Activated CD4-positive, alpha-beta memory T cell treated with anti-CD3 and anti-CD28 coated beads, Interleukin-2, amount 10 ng/mL, durations not matched to agents 7 days and 5 days (primary cell): ENCODE measurements at regions of chr4 and their contacts with region 1.

Region 1: GRCh38 chr4:24537025-24537424 is 47.3 kb downstream of the DHX15 start:
- DNase-seq: no peak
- H3K4me3 Mint-ChIP-seq: no peak overlapping the region
- H3K27ac Mint-ChIP-seq: no peak overlapping the region
- H3K4me1 Mint-ChIP-seq: peaks cover 27% of the 10 kb centered on the region
- H3K27me3 Mint-ChIP-seq: no peaks in the 10 kb centered on the region

Region 2: DNA sequence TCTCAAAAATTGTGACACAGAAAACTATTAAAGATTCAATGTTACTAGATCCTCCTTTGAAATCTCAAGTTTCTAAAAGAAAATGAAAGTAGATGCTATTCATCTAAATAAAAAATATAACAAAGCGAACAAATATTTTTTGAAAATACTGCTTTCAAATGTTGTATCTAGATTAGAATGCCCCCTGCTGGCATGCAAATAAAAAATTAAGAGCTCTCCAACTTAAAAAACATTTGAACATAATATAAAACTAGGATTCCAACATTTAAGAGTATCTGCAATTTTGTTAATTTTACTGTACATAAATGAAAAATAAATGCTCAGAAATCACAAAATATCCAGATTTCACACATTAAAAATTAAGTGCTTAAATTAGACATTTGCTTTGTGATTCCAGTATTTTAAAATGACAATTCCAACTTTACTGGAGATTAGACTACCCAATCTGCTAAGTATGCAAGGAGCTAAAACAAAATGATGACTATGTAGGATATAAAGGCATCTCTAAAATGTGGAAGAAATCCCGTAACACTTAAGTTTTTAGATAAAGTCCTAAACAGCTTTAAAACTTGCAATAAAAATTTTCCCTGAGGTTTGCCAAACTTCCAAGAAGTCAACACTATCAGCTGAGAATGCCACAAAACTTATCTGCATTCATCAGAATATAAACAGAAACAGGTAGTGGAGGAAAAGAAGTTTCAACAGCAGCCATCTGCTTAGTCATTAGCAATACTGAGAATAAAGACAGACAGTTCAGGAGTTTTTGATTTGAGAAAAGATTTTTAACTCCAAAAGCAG is 14.7 kb after region 1 on chr4:
- CTCF ChIA-PET with region 1: interaction called, 16 read pairs
- POLR2A ChIA-PET with region 1: interaction called, 6 read pairs
- DNase-seq: no peak
- H3K4me3 Mint-ChIP-seq: no peak overlapping the region
- H3K27ac Mint-ChIP-seq: peak overlapping the region; percentile 69
- H3K4me1 Mint-ChIP-seq: peaks cover 43% of the 10 kb centered on the region
- H3K27me3 Mint-ChIP-seq: no peaks in the 10 kb centered on the region